CD14-positive monocyte (primary cell): ENCODE measurements at regions of chr2 and their contacts with region 1.

Region 1: GRCh38 chr2:86440631-86441391 is at the start of gene KDM3A:
- DNase-seq: peak; percentile 98 to 99 (median 99)
- H3K4me3 ChIP-seq: peak within 1 kb of the TSS; percentile 81 to 98 (median 82)
- H3K4me3 Mint-ChIP-seq: peak within 1 kb of the TSS; percentile 93 to 98
- H3K27ac ChIP-seq: peak within 1 kb of the TSS; percentile 92 to 99
- H3K27ac Mint-ChIP-seq: peak within 1 kb of the TSS; percentile 99 to 100 (median 99)
- H3K4me1 ChIP-seq: peaks cover 21 to 22% of the 10 kb centered on the region in 2 donors
- H3K4me1 Mint-ChIP-seq: peaks cover 34% of the 10 kb centered on the region
- H3K27me3 ChIP-seq: no peaks in the 10 kb centered on the region
- H3K27me3 Mint-ChIP-seq: peaks cover 0 to 7% (median 0%) of the 10 kb centered on the region in 3 donors
- CTCF ChIP-seq: no peak
- polyA plus RNA-seq, gene KDM3A: 3.3 to 21.2 (median 7.4) TPM

Region 2: DNA sequence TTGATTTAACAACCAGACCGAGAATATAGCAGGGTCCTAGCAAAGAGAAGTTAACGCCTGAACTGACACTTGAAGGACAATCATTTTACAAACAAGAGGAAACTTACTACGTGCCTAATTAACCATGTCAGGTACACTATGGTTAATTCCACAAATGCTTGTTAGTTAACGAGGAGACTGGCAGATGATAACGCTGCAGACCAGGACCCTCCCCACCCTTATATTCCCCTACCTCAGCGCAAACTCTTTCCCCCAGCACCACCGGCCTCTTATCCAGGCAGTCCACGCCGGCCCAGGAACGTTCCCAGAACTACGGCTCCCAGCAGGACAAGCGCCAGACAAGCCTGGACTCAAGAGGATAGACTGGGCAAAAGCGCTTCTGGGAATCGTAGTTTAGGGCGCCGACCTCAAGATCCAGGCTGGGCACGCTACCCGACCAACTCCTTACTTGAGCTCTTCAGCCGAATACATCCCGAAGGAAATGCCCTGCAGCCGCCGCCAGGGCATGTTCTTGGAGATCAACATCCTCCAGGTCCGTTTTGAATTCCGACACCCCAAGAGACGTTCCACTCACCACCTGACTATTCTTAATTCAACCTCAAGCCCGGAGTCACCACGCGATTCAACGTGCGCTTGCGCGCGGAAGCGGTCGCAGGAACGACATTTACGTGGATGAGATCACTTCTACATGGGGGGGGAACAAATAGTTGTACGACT is 335.4 kb before region 1 on chr2 and contains the start of gene POLR1A:
- intact Hi-C with region 1: loop called in 1 of 2 experiments (anchors 10 kb)
- DNase-seq: peak; percentile 79 to 87 (median 80)
- H3K4me3 ChIP-seq: peak within 1 kb of the TSS; percentile 70 to 94 (median 79)
- H3K4me3 Mint-ChIP-seq: peak within 1 kb of the TSS; percentile 93 to 98
- H3K27ac ChIP-seq: peak within 1 kb of the TSS; percentile 44 to 88
- H3K27ac Mint-ChIP-seq: peak within 1 kb of the TSS; percentile 94 to 100 (median 99)
- H3K4me1 ChIP-seq: peaks cover 17 to 24% of the 10 kb centered on the region in 2 donors
- H3K4me1 Mint-ChIP-seq: peaks cover 25% of the 10 kb centered on the region
- H3K27me3 ChIP-seq: no peaks in the 10 kb centered on the region
- H3K27me3 Mint-ChIP-seq: peaks cover 0 to 1% (median 0%) of the 10 kb centered on the region in 3 donors
- CTCF ChIP-seq: no peak
- polyA plus RNA-seq, gene POLR1A: 0.45 to 2.1 (median 1.6) TPM

Region 3: GRCh38 chr2:86195055-86195807 is 245.6 kb before region 1 on chr2 and contains the start of gene IMMT:
- intact Hi-C with region 1: loop called (anchors 5 to 10 kb)
- DNase-seq: peak; percentile 93 to 94 (median 93)
- H3K4me3 ChIP-seq: peak within 1 kb of the TSS; percentile 82 to 97 (median 93)
- H3K4me3 Mint-ChIP-seq: peak within 1 kb of the TSS; percentile 91 to 96
- H3K27ac ChIP-seq: peak within 1 kb of the TSS; percentile 97 to 99
- H3K27ac Mint-ChIP-seq: peak within 1 kb of the TSS; percentile 96 to 98 (median 97)
- H3K4me1 ChIP-seq: peaks cover 22 to 31% of the 10 kb centered on the region in 2 donors
- H3K4me1 Mint-ChIP-seq: peaks cover 36% of the 10 kb centered on the region
- H3K27me3 ChIP-seq: no peaks in the 10 kb centered on the region
- H3K27me3 Mint-ChIP-seq: peaks cover 0 to 2% (median 1%) of the 10 kb centered on the region in 3 donors
- CTCF ChIP-seq: no peak
- polyA plus RNA-seq, gene IMMT: 24.3 to 54.0 (median 41.2) TPM

Region 4: DNA sequence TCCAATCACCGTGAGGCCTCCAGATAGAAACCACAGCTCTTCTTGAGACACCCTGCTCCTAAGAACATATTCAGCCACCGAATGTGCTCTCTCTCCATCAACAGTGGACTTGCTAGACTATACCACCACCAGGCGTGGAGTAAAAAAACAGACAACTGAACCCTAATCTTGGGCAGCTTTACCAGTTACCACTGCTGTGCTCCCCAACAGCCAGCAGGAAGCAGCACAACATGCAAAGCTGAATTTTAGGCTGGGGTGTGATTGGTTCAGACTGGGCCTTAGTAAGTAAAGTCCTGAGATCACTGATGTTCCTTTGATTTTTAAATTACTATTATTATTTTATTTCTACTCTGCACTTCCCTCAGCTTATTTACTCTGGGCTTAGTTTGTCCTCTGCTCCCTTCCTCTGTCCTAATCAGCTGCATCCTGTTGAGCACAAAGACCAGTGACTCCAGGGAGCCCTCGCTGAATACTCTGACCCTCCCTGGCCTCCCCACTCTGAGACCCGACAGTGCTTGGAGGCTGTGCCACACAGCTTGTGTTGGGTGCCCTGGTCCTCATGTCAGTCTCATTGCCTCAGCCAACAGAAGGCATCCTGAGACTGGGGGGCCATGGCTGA is 219.6 kb before region 1 on chr2:
- intact Hi-C with region 1: loop called in 1 of 2 experiments (anchors 10 kb)
- DNase-seq: peak; percentile 32 to 60 (median 48)
- H3K4me3 ChIP-seq: no peak overlapping the region
- H3K4me3 Mint-ChIP-seq: no peak overlapping the region
- H3K27ac ChIP-seq: no peak overlapping the region
- H3K27ac Mint-ChIP-seq: peak overlapping the region in 2 of 7 donors; percentile 24 to 59
- H3K4me1 ChIP-seq: peaks cover 14% of the 10 kb centered on the region in 2 donors
- H3K4me1 Mint-ChIP-seq: peaks cover 19% of the 10 kb centered on the region
- H3K27me3 ChIP-seq: no peaks in the 10 kb centered on the region
- H3K27me3 Mint-ChIP-seq: peaks cover 0 to 1% (median 1%) of the 10 kb centered on the region in 3 donors
- CTCF ChIP-seq: peak; percentile 85

Region 5: DNA sequence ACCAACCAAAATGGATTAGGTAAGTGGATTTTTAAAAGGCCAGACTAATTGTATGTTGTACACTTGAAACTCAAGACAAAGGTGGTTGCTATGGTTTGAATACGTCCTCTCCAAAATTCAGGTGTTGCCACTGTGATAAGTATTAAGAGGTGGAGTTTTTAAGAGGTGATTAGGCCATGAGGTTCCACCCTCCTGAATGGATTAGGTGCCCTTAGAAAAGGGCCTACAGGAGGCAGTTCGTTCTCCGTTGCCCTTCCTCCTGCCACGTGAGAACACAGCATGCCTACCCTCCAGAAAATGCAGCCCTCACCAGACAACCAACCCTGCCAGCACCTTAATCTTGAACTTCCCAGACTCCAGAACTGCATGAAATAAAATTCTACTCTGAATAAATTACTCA is 71.2 kb after region 1 on chr2:
- intact Hi-C with region 1: no loop called
- DNase-seq: no peak
- H3K4me3 ChIP-seq: no peak overlapping the region
- H3K4me3 Mint-ChIP-seq: no peak overlapping the region
- H3K27ac ChIP-seq: no peak overlapping the region
- H3K27ac Mint-ChIP-seq: peak overlapping the region in 1 of 7 donors; percentile 68
- H3K4me1 ChIP-seq: no peaks in the 10 kb centered on the region
- H3K4me1 Mint-ChIP-seq: no peaks in the 10 kb centered on the region
- H3K27me3 ChIP-seq: no peaks in the 10 kb centered on the region
- H3K27me3 Mint-ChIP-seq: no peaks in the 10 kb centered on the region
- CTCF ChIP-seq: no peak

Region 6: GRCh38 chr2:86562922-86563649 is 122.3 kb after region 1 on chr2 and contains the start of gene CHMP3:
- intact Hi-C with region 1: loop called (anchors 5 to 10 kb)
- DNase-seq: peak; percentile 98 to 99 (median 99)
- H3K4me3 ChIP-seq: peak within 1 kb of the TSS; percentile 57 to 98 (median 84)
- H3K4me3 Mint-ChIP-seq: peak within 1 kb of the TSS; percentile 89 to 97
- H3K27ac ChIP-seq: peak within 1 kb of the TSS; percentile 99 to 100
- H3K27ac Mint-ChIP-seq: peak within 1 kb of the TSS; percentile 99 to 100 (median 100)
- H3K4me1 ChIP-seq: peaks cover 20 to 33% of the 10 kb centered on the region in 2 donors
- H3K4me1 Mint-ChIP-seq: peaks cover 34% of the 10 kb centered on the region
- H3K27me3 ChIP-seq: no peaks in the 10 kb centered on the region
- H3K27me3 Mint-ChIP-seq: peaks cover 0 to 6% (median 2%) of the 10 kb centered on the region in 3 donors
- CTCF ChIP-seq: no peak
- polyA plus RNA-seq, gene CHMP3: 45.4 to 115 (median 99.4) TPM

Region 7: DNA sequence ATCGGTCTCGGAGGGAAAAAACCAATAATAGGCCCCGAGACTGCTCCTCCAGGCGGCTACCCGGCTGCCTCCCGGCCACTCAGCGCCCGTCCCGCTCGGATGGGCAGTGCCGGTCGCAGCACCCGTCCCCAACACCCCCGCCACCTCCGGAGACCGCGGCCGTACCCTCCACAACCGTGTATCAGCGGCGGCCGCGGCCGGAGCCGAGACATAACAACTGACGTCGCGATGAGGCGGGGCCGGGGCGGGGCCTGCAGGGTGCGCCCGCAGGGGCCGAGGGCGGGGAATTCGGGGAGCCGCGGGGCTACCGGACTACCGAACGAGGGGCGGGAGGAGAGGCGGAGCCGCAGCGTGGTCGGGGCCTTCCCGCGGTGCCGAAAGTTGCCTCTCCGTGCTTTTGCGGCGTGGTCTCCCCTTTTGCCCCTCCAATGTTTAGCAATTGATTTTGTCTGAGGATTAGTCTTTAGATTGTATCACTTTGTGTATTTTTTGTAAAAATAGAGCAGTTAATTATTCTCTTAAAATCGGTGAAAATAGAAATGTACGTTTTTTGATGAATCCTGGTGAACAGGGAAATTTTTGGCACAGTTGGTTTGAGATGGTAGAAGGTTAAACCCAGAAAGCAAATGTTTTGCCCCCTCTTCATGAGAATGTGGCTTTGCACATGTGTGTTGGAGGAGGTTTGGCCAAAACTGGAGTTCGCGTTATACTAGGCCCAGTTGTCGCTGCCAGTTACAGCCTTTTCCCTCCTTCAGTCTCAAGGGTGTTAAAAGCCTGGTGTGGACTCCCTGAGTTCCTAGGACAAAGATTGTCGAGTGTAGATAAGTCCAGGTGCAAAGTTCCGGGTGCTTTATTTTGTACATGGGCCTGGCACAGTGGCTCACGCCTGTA is 183.1 kb after region 1 on chr2 and contains the start of gene RNF103:
- intact Hi-C with region 1: loop called in 1 of 2 experiments (anchors 10 kb)
- DNase-seq: peak; percentile 83 to 85 (median 84)
- H3K4me3 ChIP-seq: peak within 1 kb of the TSS; percentile 65 to 92 (median 81)
- H3K4me3 Mint-ChIP-seq: peak within 1 kb of the TSS; percentile 94 to 99
- H3K27ac ChIP-seq: peak within 1 kb of the TSS; percentile 88 to 89
- H3K27ac Mint-ChIP-seq: peak within 1 kb of the TSS; percentile 93 to 97 (median 96)
- H3K4me1 ChIP-seq: peaks cover 22 to 25% of the 10 kb centered on the region in 2 donors
- H3K4me1 Mint-ChIP-seq: peaks cover 30% of the 10 kb centered on the region
- H3K27me3 ChIP-seq: no peaks in the 10 kb centered on the region
- H3K27me3 Mint-ChIP-seq: peaks cover 0 to 8% (median 0%) of the 10 kb centered on the region in 3 donors
- CTCF ChIP-seq: no peak
- polyA plus RNA-seq, gene RNF103: 1.0 to 31.9 (median 2.2) TPM